ENCODE measurements at regions of chr3 and their contacts with region 1.

Region 1: DNA sequence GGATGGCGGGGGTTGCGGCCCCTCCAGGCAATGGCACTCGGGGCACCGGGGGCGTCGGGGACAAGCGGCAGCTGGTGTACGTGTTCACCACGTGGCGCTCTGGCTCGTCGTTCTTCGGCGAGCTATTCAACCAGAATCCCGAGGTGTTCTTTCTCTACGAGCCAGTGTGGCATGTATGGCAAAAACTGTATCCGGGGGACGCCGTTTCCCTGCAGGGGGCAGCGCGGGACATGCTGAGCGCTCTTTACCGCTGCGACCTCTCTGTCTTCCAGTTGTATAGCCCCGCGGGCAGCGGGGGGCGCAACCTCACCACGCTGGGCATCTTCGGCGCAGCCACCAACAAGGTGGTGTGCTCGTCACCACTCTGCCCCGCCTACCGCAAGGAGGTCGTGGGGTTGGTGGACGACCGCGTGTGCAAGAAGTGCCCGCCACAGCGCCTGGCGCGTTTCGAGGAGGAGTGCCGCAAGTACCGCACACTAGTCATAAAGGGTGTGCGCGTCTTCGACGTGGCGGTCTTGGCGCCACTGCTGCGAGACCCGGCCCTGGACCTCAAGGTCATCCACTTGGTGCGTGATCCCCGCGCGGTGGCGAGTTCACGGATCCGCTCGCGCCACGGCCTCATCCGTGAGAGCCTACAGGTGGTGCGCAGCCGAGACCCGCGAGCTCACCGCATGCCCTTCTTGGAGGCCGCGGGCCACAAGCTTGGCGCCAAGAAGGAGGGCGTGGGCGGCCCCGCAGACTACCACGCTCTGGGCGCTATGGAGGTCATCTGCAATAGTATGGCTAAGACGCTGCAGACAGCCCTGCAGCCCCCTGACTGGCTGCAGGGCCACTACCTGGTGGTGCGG is 1.9 kb downstream of the CHST2 start:
- DNase-seq: no peak

Region 2: DNA sequence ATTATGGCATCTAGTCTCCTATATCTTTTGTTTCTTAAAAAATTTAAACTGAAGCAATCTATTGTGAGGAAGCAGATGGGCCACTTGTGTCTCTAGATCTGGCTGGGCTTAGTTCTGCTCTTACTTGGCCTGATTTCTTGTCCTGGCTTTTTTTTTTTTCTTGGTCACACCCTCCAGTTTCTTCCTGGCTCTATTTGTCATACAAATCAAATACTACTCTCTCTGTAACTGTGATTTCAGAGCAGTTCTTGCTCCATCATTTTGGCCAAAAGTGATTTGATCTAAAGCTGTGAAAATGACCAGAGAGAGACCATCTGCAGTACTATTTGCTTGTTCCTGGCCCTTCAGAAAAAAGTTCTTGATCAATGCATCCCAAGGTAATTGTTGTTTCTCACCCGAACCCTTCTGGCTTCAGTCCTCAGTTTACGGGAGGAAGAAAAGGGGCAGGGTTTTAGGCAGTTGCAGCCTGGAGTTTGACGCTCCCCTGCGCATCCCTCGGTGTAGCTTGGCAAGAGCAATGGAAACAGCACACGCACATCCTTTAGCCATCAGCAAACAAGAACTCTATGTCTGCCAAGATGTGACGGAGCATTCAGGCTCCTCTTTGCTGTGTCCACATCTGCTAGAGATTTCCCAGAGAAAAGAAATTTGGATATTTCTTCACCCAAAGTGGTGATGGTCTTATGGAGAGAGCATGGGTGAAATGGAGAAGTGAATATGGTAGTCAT is 29.7 kb after region 1 on chr3:
- intact Hi-C with region 1: no loop called
- DNase-seq: no peak

Region 3: GRCh38 chr3:143302638-143303171 is 181.2 kb after region 1 on chr3:
- intact Hi-C with region 1: loop called (anchors 5 kb)
- DNase-seq: peak; percentile 82

Measured in cardiac septum (tissue), 1 donor.